ENCODE measurements at regions of chr12 and their contacts with region 1.

Region 1: GRCh38 chr12:64679487-64679983 is 69.2 kb downstream of the RASSF3 start:
- DNase-seq: peak; percentile 41 to 70 (median 59)
- H3K4me3 ChIP-seq: peak overlapping the region; percentile 2
- H3K27ac ChIP-seq: peak overlapping the region; percentile 36 to 76
- H3K4me1 ChIP-seq: peaks cover 15% of the 10 kb centered on the region
- H3K27me3 ChIP-seq: no peaks in the 10 kb centered on the region
- CTCF ChIP-seq: no peak
- EP300 ChIP-seq: no peak
- POLR2A ChIP-seq: no peak

Region 2: GRCh38 chr12:64625243-64626077 is 54.1 kb before region 1 on chr12:
- intact Hi-C with region 1: loop called in 1 of 4 experiments (anchors 1 kb)
- DNase-seq: peak in 3 of 5 donors; percentile 51 to 57 (median 54)
- H3K4me3 ChIP-seq: peak overlapping the region; percentile 5
- H3K27ac ChIP-seq: peak overlapping the region; percentile 4 to 24
- H3K4me1 ChIP-seq: peaks cover 4% of the 10 kb centered on the region
- H3K27me3 ChIP-seq: no peaks in the 10 kb centered on the region
- CTCF ChIP-seq: no peak
- EP300 ChIP-seq: no peak
- POLR2A ChIP-seq: no peak

Region 3: DNA sequence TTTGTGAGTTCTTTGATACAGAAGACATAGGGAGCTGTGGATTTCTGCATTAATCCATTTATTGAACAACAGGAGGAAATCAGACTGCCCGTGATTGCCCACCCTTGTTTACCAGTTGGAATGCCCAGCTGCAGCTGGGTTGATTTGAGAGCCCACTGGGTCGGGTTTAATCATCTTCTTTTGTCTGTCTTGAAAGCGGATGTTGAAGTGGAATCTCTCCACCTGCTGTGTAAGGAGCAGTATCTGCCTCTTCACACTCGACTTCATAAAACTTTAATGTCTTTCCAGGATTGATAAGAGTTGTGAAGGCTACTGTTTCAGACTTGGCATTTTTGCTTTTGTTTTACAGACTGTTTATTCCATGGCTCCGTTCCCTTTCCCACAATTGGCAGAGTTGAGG is 184.8 kb after region 1 on chr12:
- intact Hi-C with region 1: no loop called
- DNase-seq: no peak
- H3K4me3 ChIP-seq: no peak overlapping the region
- H3K27ac ChIP-seq: no peak overlapping the region
- H3K4me1 ChIP-seq: no peaks in the 10 kb centered on the region
- H3K27me3 ChIP-seq: no peaks in the 10 kb centered on the region
- CTCF ChIP-seq: no peak
- EP300 ChIP-seq: no peak
- POLR2A ChIP-seq: no peak